ENCODE measurements at regions of chr1 and their contacts with region 1.

Region 1: GRCh38 chr1:19390901-19391595 is 78.9 kb downstream of the SLC66A1 start:
- DNase-seq: no peak
- ATAC-seq: peak; percentile 31

Region 2: GRCh38 chr1:19454265-19455146 is 63.5 kb after region 1 on chr1:
- intact Hi-C with region 1: loop called (anchors 5 kb)
- DNase-seq: no peak
- ATAC-seq: peak; percentile 18

Region 3: DNA sequence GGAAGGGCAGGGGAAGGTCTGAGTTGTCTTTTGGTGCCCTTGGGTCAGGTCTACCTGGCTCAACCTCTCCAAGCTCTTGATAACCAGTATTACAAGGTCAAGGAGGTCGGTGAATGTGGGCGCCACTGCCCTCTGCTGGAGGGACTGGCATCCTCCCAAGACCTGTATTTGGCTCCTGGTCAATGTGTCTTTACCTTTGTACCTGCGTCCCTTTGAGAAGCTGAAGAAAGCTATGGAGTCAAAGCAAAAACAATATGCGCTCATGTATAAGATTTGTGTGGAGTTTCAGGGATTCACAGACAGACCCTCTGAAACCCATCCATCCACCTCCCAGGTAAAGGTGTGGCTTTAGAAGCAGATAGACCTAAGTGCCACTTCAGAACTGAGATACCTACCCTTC is 191.3 kb after region 1 on chr1:
- intact Hi-C with region 1: loop called (anchors 5 kb)
- DNase-seq: peak; percentile 81
- ATAC-seq: no peak

Region 4: GRCh38 chr1:19651141-19651737 is 260.2 kb after region 1 on chr1:
- intact Hi-C with region 1: loop called (anchors 2 kb)
- DNase-seq: peak; percentile 81
- ATAC-seq: peak; percentile 88